Activated CD8-positive, alpha-beta T cell treated with anti-CD3 and anti-CD28 coated beads for 36 hours (primary cell): ENCODE measurements at regions of chr6 and their contacts with region 1.

Region 1: DNA sequence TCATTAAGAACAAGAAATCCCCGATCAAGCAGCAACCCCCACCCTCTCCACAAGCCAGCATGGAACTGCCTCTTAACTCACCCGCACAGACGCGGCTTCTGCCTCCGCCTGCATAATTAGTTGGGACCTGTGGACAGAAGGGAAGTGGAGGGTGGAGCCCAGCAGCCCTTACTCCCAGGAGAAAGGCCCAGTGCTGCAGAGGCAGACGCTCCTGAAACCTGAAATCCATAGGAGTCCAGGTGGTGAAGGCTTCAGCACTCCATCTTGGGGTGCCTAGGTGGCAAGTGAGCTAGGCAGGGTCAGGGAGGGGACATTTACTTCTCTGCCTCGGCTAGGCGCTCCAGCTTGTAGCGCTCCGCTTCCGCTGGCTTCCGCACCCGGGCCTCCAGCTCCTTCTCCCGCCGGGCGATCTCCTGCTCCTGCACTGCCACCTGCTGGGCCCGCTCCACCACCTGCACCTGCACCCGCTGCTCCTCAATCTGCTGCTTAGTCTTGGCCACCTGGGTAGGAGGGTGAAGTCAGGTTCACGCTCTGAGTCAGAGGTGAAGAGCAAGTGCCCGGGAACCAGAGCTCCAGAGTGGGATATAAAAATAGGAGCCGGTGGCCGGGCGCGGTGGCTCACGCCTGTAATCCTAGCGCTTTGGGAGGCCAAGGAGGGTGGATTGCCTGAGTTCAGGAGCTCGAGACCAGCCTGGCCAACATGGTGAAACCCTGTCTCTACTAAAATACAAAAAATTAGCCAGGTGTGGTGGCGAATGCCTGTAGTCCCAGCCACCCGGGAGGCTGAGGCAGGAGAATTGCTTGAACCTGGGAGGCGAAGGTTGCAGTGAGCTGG is 10.7 kb downstream of the TUBB start:
- DNase-seq: peak; percentile 93
- ATAC-seq: peak; percentile 88
- H3K4me3 Mint-ChIP-seq: peak overlapping the region; percentile 54
- H3K27ac Mint-ChIP-seq: peak overlapping the region; percentile 44
- H3K4me1 Mint-ChIP-seq: peaks cover 46% of the 10 kb centered on the region
- H3K27me3 Mint-ChIP-seq: no peaks in the 10 kb centered on the region
- CTCF ChIP-seq: peak; percentile 75

Region 2: DNA sequence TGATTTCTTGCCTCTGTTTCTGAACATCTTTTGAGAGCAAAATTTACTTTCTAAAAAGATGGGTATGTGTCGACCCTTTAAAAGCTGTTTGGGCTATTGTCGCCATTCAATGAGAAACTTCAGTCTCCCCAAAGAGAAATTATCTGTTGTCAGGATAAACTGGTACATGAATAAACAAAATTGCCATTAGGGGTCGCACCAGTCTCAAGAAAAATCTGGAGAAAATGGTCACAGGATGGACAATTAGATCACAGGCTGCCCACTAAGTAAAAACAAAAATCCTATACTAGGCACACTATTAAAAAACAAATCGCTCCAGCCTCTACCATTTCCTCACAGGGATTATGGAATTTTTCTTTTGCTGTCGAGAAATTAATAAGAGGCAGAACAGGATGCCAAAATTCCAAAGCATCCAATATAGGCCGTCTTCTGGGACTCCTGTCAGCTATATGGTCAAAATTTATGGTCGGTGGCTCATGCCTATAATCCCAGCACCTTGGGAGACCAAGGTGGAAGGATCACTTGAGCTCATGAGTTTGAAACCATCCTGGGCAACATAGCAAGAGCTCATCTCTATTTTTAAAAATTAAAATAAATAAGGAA is 247.0 kb before region 1 on chr6:
- CTCF ChIA-PET with region 1: interaction called, 10 read pairs
- POLR2A ChIA-PET with region 1: no interaction called
- intact Hi-C with region 1: no loop called
- DNase-seq: peak; percentile 51
- ATAC-seq: no peak
- H3K4me3 Mint-ChIP-seq: no peak overlapping the region
- H3K27ac Mint-ChIP-seq: no peak overlapping the region
- H3K4me1 Mint-ChIP-seq: peaks cover 42% of the 10 kb centered on the region
- H3K27me3 Mint-ChIP-seq: peaks cover 37% of the 10 kb centered on the region
- CTCF ChIP-seq: peak; percentile 84

Region 3: GRCh38 chr6:30640476-30640875 is 90.3 kb before region 1 on chr6:
- CTCF ChIA-PET with region 1: interaction called, 13 read pairs
- POLR2A ChIA-PET with region 1: interaction called, 4 read pairs
- intact Hi-C with region 1: no loop called
- DNase-seq: no peak
- ATAC-seq: no peak
- H3K4me3 Mint-ChIP-seq: no peak overlapping the region
- H3K27ac Mint-ChIP-seq: peak overlapping the region; percentile 50
- H3K4me1 Mint-ChIP-seq: peaks cover 22% of the 10 kb centered on the region
- H3K27me3 Mint-ChIP-seq: no peaks in the 10 kb centered on the region
- CTCF ChIP-seq: no peak

Region 4: DNA sequence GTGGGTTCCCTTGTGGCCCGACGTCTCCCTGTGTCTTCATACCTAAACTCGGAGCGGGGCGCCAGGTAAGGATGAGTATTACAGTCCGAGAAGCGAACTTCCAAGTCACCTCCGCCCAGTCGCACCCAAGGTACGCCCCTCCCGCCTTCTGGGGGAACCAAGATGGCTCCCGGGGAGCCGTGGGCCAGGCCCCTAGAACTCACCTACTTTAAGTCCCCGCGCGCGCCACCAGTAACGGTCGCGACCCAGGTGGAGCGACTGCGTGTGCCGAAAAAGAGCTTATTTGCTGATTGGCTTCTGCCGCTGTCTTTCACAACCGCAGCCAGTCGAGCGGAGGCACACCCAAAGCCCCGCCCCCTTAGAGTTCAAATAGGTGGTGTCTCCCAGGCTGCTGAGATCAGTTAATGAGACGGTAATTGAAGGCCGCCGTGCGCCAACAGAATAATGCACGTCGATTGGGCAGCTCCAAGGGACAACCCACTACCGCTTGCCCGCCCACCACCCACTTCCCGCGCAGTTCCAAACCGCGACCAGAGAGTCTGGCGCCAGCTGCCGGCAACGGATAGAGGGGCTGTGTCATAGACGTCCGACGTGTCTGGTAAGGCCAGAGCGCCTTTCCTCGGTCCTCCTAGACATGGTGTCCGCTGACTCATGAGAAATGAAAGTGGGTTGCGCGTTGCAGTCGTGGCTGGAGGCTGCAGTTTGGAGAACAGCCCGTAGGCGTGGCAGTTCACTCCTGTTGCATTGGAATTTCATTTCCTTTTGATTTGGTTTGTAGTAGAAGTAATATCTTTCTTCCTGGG is 13.6 kb before region 1 on chr6 and contains the start of gene MDC1:
- CTCF ChIA-PET with region 1: interaction called, 60 read pairs
- POLR2A ChIA-PET with region 1: interaction called, 136 read pairs
- intact Hi-C with region 1: no loop called
- DNase-seq: peak; percentile 100
- ATAC-seq: peak; percentile 78
- H3K4me3 Mint-ChIP-seq: peak within 1 kb of the TSS; percentile 80
- H3K27ac Mint-ChIP-seq: peak within 1 kb of the TSS; percentile 99
- H3K4me1 Mint-ChIP-seq: peaks cover 37% of the 10 kb centered on the region
- H3K27me3 Mint-ChIP-seq: no peaks in the 10 kb centered on the region
- CTCF ChIP-seq: no peak
- total RNA-seq, gene MDC1: 80.4 to 90.7 TPM

Region 5: GRCh38 chr6:30821862-30822782 is 91.3 kb after region 1 on chr6:
- CTCF ChIA-PET with region 1: interaction called, 30 read pairs
- POLR2A ChIA-PET with region 1: interaction called, 212 read pairs
- intact Hi-C with region 1: no loop called
- DNase-seq: no peak
- ATAC-seq: no peak
- H3K4me3 Mint-ChIP-seq: no peak overlapping the region
- H3K27ac Mint-ChIP-seq: peak overlapping the region; percentile 82
- H3K4me1 Mint-ChIP-seq: peaks cover 79% of the 10 kb centered on the region
- H3K27me3 Mint-ChIP-seq: no peaks in the 10 kb centered on the region
- CTCF ChIP-seq: peak; percentile 74

Region 6: GRCh38 chr6:30907758-30908591 is 177.2 kb after region 1 on chr6 and contains the start of gene GTF2H4:
- CTCF ChIA-PET with region 1: interaction called, 24 read pairs
- POLR2A ChIA-PET with region 1: no interaction called
- intact Hi-C with region 1: no loop called
- DNase-seq: peak; percentile 98
- ATAC-seq: peak; percentile 99
- H3K4me3 Mint-ChIP-seq: peak within 1 kb of the TSS; percentile 91
- H3K27ac Mint-ChIP-seq: peak within 1 kb of the TSS; percentile 84
- H3K4me1 Mint-ChIP-seq: peaks cover 17% of the 10 kb centered on the region
- H3K27me3 Mint-ChIP-seq: no peaks in the 10 kb centered on the region
- CTCF ChIP-seq: no peak
- total RNA-seq, gene GTF2H4: 37.1 to 41.9 TPM